ENCODE measurements at regions of chr2 and their contacts with region 1.

Region 1: GRCh38 chr2:231706731-231707624 is 1.3 kb upstream of the PTMA start:
- DNase-seq: peak; percentile 97
- H3K4me3 ChIP-seq: peak overlapping the region; percentile 77
- H3K27ac ChIP-seq: peak overlapping the region; percentile 98
- H3K27me3 ChIP-seq: no peaks in the 10 kb centered on the region
- CTCF ChIP-seq: peak; percentile 91

Region 2: GRCh38 chr2:231152800-231153557 is 554.0 kb before region 1 on chr2:
- CTCF ChIA-PET with region 1: no interaction called
- POLR2A ChIA-PET with region 1: no interaction called
- DNase-seq: peak; percentile 55
- H3K4me3 ChIP-seq: no peak overlapping the region
- H3K27ac ChIP-seq: no peak overlapping the region
- H3K27me3 ChIP-seq: no peaks in the 10 kb centered on the region
- CTCF ChIP-seq: no peak

Region 3: GRCh38 chr2:231297108-231297908 is 409.7 kb before region 1 on chr2:
- CTCF ChIA-PET with region 1: no interaction called
- POLR2A ChIA-PET with region 1: no interaction called
- DNase-seq: peak; percentile 37
- H3K4me3 ChIP-seq: no peak overlapping the region
- H3K27ac ChIP-seq: no peak overlapping the region
- H3K27me3 ChIP-seq: no peaks in the 10 kb centered on the region
- CTCF ChIP-seq: peak; percentile 85

Region 4: GRCh38 chr2:231378026-231378722 is 328.8 kb before region 1 on chr2:
- CTCF ChIA-PET with region 1: no interaction called
- POLR2A ChIA-PET with region 1: no interaction called
- DNase-seq: no peak
- H3K4me3 ChIP-seq: no peak overlapping the region
- H3K27ac ChIP-seq: no peak overlapping the region
- H3K27me3 ChIP-seq: peaks cover 3% of the 10 kb centered on the region
- CTCF ChIP-seq: no peak

Region 5: DNA sequence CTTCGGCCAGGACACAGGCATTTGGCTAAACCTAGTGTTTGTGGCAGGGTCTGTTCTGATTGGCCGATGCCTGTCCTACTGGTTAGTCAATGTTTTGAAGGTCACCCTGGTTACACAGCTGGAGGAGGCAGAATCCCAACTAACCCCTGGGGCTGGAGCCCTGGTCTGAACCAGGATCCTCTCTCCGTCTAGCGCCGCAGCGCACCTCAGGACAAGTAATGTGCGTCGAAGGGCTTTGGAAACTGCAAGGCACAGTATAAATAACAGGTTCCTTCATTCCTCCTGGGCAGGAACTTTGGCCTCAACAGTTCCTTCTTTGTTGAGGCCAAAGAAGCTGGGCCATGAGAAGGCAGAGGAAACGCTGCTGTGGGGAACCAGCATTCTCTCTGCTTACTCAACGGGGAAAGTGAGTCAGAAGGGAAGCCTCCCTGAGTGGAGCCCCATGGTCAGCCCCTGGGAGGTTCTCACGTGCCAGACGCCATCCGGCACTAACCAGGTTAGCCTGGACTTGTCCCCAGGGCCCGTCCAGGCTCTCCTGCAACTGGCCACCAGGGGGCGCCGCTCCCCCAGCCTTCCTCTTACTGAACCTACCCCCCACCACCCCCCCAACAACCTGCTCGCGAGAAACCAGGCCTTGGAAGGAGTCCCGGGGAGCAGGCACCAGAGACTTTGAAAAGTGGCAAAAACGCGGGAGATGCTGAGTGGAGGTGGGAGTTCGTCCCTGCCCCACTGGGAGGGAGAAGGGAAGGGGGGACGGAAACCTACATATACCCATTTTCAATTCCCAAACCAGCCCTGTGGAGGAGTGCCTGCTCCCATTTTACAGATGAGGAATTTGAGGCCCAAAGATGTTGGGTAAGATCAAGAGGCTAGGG is 94.6 kb before region 1 on chr2:
- CTCF ChIA-PET with region 1: interaction called, 96 read pairs
- POLR2A ChIA-PET with region 1: interaction called, 16 read pairs
- DNase-seq: peak; percentile 84
- H3K4me3 ChIP-seq: no peak overlapping the region
- H3K27ac ChIP-seq: peak overlapping the region; percentile 96
- H3K27me3 ChIP-seq: no peaks in the 10 kb centered on the region
- CTCF ChIP-seq: peak; percentile 93

Region 6: DNA sequence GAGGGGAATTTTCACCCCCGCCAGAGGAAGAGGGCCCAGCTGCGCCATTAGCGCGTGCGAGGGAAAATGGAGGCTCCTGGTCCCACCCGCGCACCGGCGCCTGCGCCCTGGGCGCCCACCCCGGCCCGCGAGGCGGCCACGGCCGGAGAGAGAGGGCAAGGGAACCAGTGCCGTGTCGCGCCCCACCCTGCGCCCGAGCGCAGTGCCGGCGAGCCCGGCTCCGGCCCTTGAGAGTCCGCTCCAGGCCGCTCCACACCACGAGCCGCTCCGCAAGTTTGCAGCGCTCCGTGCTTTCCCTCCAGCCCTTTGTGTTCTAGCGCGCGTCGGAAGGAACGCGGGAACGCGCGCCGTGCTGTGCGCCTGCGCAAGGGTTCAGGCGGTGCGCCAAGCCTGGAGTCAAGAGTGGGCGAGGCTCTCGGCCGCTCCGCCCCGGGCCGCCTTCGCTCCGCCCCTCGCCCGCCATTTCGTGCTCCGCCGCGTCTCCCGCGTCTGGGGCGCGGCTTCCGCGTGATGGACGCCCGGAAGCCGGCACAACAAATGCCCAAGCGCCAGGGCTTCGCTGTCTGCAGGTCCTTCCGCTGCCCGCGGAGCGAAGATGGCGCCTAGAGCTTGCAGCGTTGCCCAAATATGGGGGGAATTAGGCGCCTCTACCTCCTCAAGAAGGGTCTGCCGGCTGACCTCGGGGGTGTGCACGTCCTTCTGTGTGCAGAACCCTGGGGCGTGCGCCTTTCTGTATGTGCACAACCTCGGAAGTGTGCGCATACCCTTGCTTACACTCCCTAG is 44.8 kb before region 1 on chr2:
- CTCF ChIA-PET with region 1: interaction called, 4 read pairs
- POLR2A ChIA-PET with region 1: interaction called, 25 read pairs
- DNase-seq: peak; percentile 95
- H3K4me3 ChIP-seq: peak overlapping the region; percentile 46
- H3K27ac ChIP-seq: peak overlapping the region; percentile 61
- H3K27me3 ChIP-seq: no peaks in the 10 kb centered on the region
- CTCF ChIP-seq: no peak

Region 7: GRCh38 chr2:231680992-231681853 is 25.8 kb before region 1 on chr2:
- CTCF ChIA-PET with region 1: interaction called, 227 read pairs
- POLR2A ChIA-PET with region 1: interaction called, 51 read pairs
- DNase-seq: peak; percentile 57
- H3K4me3 ChIP-seq: peak overlapping the region; percentile 56
- H3K27ac ChIP-seq: peak overlapping the region; percentile 83
- H3K27me3 ChIP-seq: no peaks in the 10 kb centered on the region
- CTCF ChIP-seq: no peak

Region 8: GRCh38 chr2:231693656-231694355 is 13.2 kb before region 1 on chr2:
- CTCF ChIA-PET with region 1: interaction called, 12 read pairs
- POLR2A ChIA-PET with region 1: interaction called, 7 read pairs
- DNase-seq: no peak
- H3K4me3 ChIP-seq: no peak overlapping the region
- H3K27ac ChIP-seq: peak overlapping the region; percentile 11
- H3K27me3 ChIP-seq: no peaks in the 10 kb centered on the region
- CTCF ChIP-seq: no peak

Region 9: DNA sequence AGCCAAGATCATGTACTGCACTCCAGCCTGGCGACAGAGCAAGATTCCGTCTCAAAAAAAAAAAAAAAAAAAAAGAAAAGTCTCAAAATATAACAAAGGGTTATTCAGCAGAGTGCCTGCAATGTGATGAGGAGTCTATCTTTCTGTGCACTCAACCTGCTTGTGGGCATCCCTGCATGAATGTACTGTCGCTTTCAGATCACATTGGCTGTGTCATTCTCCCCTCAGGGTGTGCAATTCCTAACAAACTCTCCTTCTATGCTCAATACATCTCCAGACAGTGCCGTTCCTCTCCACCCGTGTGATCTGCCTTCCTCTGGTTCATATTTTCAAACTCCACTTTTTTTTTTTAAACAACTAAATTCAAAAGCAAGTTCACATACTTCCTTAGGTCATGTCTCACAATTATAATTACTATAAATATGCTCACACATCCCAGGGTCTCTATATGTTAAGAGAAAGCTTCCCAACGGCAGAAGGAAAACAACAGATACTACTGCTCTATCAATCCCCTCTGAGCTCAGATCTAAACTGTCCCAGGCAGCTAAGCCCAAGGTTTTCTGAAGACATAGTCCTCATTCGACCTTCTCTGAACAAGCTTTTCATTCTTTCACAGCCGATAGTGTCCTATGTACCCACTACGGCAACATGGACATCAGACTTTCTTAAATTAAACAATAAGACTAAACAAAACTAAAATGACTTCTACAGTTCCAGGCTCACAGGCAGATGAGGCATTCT is 36.6 kb after region 1 on chr2:
- CTCF ChIA-PET with region 1: interaction called, 10 read pairs
- POLR2A ChIA-PET with region 1: no interaction called
- DNase-seq: no peak
- H3K4me3 ChIP-seq: no peak overlapping the region
- H3K27ac ChIP-seq: no peak overlapping the region
- H3K27me3 ChIP-seq: no peaks in the 10 kb centered on the region
- CTCF ChIP-seq: no peak

Measured in AG04450 (cell line).